Endothelial cell of umbilical vein (primary cell): ENCODE measurements at regions of chr1 and their contacts with region 1.

Region 1: GRCh38 chr1:27556781-27557595 is 47.0 kb downstream of the AHDC1 start:
- DNase-seq: peak; percentile 86
- H3K4me3 ChIP-seq: no peak overlapping the region
- H3K27ac ChIP-seq: no peak overlapping the region
- H3K4me1 ChIP-seq: peaks cover 10% of the 10 kb centered on the region
- H3K27me3 ChIP-seq: no peaks in the 10 kb centered on the region
- CTCF ChIP-seq: peak; percentile 67 to 92
- POLR2A ChIP-seq: no peak

Region 2: DNA sequence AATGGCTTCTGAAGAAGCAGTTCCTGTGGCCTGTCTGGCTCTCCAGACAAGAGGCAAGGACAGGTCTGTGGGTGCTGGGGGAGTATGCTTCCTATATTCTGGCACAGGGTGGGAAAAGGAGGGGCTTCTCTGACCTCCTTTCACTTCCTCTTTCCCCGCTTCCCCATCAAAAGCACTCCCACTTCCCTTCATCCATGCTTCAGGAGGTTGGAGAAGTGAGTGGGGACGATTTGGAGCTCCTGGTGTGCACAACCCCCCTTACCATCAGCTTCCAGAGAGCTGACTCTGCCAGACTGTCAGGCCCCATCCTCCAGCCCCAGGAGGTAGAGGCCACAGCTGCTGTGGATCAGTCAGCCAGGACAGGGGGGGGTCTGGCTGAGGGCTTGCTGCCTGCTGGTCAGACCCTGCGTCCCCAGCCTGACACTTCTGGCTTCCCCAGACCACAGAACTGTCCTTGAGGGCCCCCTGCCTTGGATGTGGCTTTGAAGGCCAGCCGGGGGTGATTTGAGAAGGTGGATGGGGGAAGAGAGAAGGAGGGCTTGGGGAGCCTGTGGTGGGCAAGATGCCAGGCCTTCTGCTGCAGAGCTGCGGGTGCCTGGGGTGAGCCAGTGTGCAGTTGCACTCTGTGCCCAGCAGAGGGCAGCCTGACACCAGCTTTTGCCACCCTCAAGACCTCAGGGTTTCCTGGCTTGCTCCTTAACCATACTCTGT is 256.5 kb before region 1 on chr1:
- CTCF ChIA-PET with region 1: interaction called, 7 read pairs
- POLR2A ChIA-PET with region 1: no interaction called
- dilution Hi-C with region 1: no loop called
- intact Hi-C with region 1: loop called (anchors 1 kb)
- DNase-seq: peak; percentile 89
- H3K4me3 ChIP-seq: no peak overlapping the region
- H3K27ac ChIP-seq: no peak overlapping the region
- H3K4me1 ChIP-seq: no peaks in the 10 kb centered on the region
- H3K27me3 ChIP-seq: no peaks in the 10 kb centered on the region
- CTCF ChIP-seq: peak; percentile 95 to 98
- POLR2A ChIP-seq: no peak

Region 3: GRCh38 chr1:27416387-27417111 is 140.4 kb before region 1 on chr1:
- CTCF ChIA-PET with region 1: interaction called, 41 read pairs
- POLR2A ChIA-PET with region 1: no interaction called
- dilution Hi-C with region 1: no loop called
- intact Hi-C with region 1: no loop called
- DNase-seq: peak; percentile 80
- H3K4me3 ChIP-seq: no peak overlapping the region
- H3K27ac ChIP-seq: no peak overlapping the region
- H3K4me1 ChIP-seq: peaks cover 5% of the 10 kb centered on the region
- H3K27me3 ChIP-seq: no peaks in the 10 kb centered on the region
- CTCF ChIP-seq: peak; percentile 75 to 76
- POLR2A ChIP-seq: no peak

Region 4: GRCh38 chr1:27517907-27518718 is 38.9 kb before region 1 on chr1:
- CTCF ChIA-PET with region 1: interaction called, 10 read pairs
- POLR2A ChIA-PET with region 1: no interaction called
- dilution Hi-C with region 1: no loop called
- intact Hi-C with region 1: no loop called
- DNase-seq: no peak
- H3K4me3 ChIP-seq: no peak overlapping the region
- H3K27ac ChIP-seq: no peak overlapping the region
- H3K4me1 ChIP-seq: peaks cover 13% of the 10 kb centered on the region
- H3K27me3 ChIP-seq: no peaks in the 10 kb centered on the region
- CTCF ChIP-seq: no peak
- POLR2A ChIP-seq: no peak

Region 5: DNA sequence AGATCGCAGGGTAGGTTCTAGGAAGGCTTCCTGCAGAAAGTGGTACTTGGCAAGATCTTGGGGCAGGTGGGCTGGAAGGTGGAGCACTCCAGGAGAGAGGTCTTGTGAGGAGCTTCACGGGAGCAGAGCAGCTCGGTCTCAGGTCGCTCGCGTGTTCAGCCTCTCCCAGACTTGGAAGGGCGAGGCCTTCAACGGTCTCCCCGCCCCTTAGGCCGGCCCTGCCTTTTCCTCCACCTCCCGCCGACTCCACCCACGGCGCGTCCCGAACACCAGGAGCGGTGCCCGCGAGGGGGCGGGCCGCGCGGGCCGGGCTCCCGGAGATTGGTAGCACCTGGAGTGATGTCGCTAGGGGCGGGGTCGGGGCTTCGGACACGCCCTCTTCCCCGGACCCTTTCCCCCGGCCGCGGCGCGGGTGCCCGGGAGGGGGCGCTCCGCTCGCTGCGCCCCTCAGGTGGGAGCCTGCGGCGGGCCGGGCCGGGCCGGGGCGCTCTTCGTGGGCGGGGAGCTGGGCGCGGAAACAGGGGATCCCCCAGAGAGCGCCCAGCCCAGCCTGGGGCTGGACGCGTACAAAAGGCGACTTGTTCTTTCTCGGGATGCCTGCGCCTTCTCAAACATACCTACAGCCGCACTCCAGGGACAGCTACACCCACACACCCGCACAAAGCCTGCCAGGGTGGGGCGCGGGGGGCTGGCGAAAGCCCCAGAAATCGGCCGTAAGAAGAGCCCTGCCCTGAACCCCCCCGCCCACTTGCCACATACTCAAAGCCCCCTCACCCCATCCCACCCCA is 11.5 kb after region 1 on chr1:
- CTCF ChIA-PET with region 1: interaction called, 112 read pairs
- POLR2A ChIA-PET with region 1: interaction called, 4 read pairs
- dilution Hi-C with region 1: no loop called
- intact Hi-C with region 1: loop called (anchors 1 kb)
- DNase-seq: peak; percentile 91
- H3K4me3 ChIP-seq: no peak overlapping the region
- H3K27ac ChIP-seq: no peak overlapping the region
- H3K4me1 ChIP-seq: peaks cover 10% of the 10 kb centered on the region
- H3K27me3 ChIP-seq: no peaks in the 10 kb centered on the region
- CTCF ChIP-seq: peak; percentile 70 to 79
- POLR2A ChIP-seq: no peak

Region 6: GRCh38 chr1:27589841-27590426 is 32.9 kb after region 1 on chr1:
- CTCF ChIA-PET with region 1: interaction called, 33 read pairs
- POLR2A ChIA-PET with region 1: no interaction called
- dilution Hi-C with region 1: no loop called
- intact Hi-C with region 1: no loop called
- DNase-seq: peak; percentile 47
- H3K4me3 ChIP-seq: no peak overlapping the region
- H3K27ac ChIP-seq: no peak overlapping the region
- H3K4me1 ChIP-seq: no peaks in the 10 kb centered on the region
- H3K27me3 ChIP-seq: no peaks in the 10 kb centered on the region
- CTCF ChIP-seq: no peak
- POLR2A ChIP-seq: no peak

Region 7: DNA sequence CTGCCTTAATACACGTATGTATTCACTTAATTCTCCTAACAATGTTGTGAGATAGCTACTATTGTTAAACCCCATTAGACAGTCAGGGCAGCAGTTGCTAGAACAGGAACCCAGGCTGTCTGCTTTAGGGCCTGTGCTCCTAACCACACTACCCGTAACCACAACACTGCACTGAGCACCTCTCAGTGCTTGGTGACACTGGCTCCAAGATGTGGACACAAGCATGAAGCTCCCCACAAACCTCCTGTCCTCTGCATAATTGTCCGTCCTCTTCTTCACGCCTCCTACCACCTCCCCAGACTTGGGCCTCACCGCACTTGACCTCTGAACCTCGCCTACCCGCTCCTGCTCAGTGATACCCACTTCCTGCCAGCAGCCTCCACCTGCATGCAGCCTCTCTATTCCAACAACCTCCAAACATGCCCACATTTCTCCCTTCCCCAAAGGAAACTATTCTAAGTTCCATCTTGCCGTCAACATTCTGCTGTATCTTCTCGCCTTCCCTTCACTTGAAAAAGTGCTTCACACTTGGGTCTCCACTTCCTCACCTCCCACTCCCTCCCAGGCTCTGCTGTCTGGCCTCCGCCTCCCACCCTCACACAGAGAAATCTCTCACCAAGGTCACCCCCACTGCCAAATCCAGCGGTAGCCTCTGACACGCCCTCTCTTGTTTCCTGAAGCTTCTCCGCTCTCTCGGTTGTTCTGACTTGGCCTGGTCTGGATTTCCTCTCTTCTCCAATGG is 61.5 kb after region 1 on chr1:
- CTCF ChIA-PET with region 1: no interaction called
- POLR2A ChIA-PET with region 1: no interaction called
- dilution Hi-C with region 1: no loop called
- intact Hi-C with region 1: no loop called
- DNase-seq: no peak
- H3K4me3 ChIP-seq: no peak overlapping the region
- H3K27ac ChIP-seq: no peak overlapping the region
- H3K4me1 ChIP-seq: peaks cover 24% of the 10 kb centered on the region
- H3K27me3 ChIP-seq: no peaks in the 10 kb centered on the region
- CTCF ChIP-seq: no peak
- POLR2A ChIP-seq: no peak